ENCODE measurements at regions of chr1 and their contacts with region 1.

Region 1: DNA sequence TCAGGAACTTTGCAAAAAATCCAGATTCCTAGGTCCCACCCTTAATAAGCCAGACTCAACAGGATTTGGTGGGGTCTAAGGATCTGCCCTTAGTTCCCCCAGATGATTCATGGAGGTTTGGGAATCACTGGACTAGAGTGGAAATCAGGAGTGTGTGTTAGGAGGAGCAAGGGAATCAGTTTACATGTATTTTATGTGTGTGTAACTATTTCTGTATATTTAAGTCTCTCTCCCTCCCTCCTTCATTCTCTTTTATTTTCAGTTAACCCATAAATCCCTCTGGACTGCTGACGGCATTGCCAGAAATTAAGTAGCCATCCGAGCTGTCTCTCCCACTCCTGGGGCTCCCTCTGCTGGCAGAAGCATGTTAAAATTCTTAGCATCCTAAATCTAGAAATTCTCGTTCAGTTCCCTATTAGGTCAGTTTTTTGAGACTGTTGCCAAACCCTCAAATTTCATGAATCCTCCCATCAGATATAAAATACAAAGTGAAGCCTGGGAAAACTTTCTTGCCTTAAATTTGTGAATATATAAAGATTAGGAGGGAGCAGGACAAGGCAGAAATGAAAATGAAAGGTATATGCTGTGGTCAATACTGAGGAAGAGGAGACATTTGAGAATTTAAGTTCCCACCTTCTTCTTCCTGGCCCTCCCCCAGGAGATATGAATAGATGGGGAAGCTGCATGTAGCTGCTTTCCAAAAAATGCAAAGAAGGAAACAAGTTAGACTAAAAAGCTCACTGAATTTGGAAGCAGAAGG is 11.7 kb upstream of the HSD11B1 start:
- DNase-seq: peak; percentile 63 to 78 (median 65)
- ATAC-seq: peak; percentile 77 to 84 (median 79)
- H3K4me3 ChIP-seq: no peak overlapping the region
- H3K27ac ChIP-seq: peak overlapping the region in 1 of 3 donors; percentile 12
- H3K4me1 ChIP-seq: peaks cover 0 to 16% (median 6%) of the 10 kb centered on the region in 4 donors
- H3K27me3 ChIP-seq: no peaks in the 10 kb centered on the region
- CTCF ChIP-seq: peak; percentile 85 to 95 (median 91)
- POLR2A ChIP-seq: no peak

Region 2: DNA sequence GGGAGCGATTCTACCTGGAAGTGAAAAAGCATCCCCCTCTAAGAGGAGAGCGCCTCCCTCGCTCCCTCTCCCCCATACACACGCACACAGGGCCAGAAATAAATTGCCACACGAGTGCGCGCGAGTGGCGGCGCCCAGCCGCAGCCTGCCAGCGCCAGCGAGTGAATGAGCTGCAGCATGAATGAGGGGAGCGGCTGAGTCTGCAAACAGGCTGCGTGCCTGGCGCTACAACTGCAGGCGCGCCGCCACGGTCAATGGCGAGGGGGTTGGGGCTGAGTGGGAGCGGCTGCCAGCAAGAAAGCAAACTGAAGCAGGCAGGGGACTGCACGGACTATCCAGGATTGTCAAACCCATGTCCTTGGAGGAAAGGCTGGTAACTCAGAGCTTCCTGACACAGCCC is 107.3 kb before region 1 on chr1:
- intact Hi-C with region 1: loop called (anchors 5 to 10 kb)
- DNase-seq: peak in 1 of 3 donors; percentile 46
- ATAC-seq: peak; percentile 65 to 76 (median 70)
- H3K4me3 ChIP-seq: no peak overlapping the region
- H3K27ac ChIP-seq: no peak overlapping the region
- H3K4me1 ChIP-seq: peaks cover 0 to 6% (median 3%) of the 10 kb centered on the region in 4 donors
- H3K27me3 ChIP-seq: peaks cover 0 to 8% of the 10 kb centered on the region in 2 donors
- CTCF ChIP-seq: no peak
- POLR2A ChIP-seq: no peak

Region 3: DNA sequence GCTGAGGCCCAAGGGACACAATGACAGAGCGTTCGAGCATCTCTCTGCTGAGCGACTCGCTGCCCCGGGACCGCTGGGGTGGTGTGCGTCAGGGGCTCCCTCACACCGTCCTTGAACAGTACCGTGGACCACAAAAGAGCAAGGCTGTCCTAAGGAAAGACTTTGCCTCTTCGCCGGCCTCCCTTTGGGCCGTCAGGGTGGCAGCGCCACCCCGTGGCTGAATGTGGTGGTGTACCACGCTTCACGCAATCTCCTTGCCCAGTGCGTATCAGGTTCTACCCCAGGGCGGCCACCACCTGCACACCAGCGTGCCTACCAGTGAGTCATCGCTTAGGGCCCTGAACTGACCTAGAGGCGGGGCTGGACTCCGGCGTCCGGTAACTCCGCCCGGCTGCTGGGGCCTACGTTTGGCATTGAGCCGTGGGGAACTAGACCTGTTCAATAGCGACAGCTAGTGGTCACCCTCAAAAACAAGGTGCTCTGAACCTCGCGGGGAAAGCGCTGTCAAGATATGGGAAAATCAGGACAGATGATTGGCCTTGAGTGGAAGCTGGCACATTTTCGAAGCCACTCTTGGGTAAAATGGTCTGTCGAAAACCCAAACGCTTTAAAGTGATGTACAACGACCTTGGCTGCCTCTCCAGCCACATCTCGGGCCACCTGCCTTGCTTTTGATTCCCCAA is 54.8 kb after region 1 on chr1:
- intact Hi-C with region 1: loop called (anchors 5 to 10 kb)
- DNase-seq: peak; percentile 95 to 98 (median 98)
- ATAC-seq: peak; percentile 96 to 99 (median 98)
- H3K4me3 ChIP-seq: peak overlapping the region in 1 of 3 donors; percentile 6
- H3K27ac ChIP-seq: peak overlapping the region in 2 of 3 donors; percentile 49 to 64
- H3K4me1 ChIP-seq: peaks cover 0 to 28% (median 2%) of the 10 kb centered on the region in 4 donors
- H3K27me3 ChIP-seq: no peaks in the 10 kb centered on the region
- CTCF ChIP-seq: peak in 3 of 4 donors; percentile 93 to 99 (median 97)
- POLR2A ChIP-seq: no peak